Transverse colon (tissue), 4 donors: ENCODE measurements at regions of chr1 and their contacts with region 1.

Region 1: GRCh38 chr1:20981915-20982314 is 194.8 kb downstream of the EIF4G3 start:
- DNase-seq: no peak
- H3K4me3 ChIP-seq: no peak overlapping the region
- H3K27ac ChIP-seq: no peak overlapping the region
- H3K4me1 ChIP-seq: peaks cover 0 to 15% (median 0%) of the 10 kb centered on the region in 4 donors
- H3K27me3 ChIP-seq: no peaks in the 10 kb centered on the region
- CTCF ChIP-seq: peak; percentile 16 to 42 (median 27)
- EP300 ChIP-seq: no peak
- POLR2A ChIP-seq: no peak

Region 2: GRCh38 chr1:21184276-21184675 is 202.4 kb after region 1 on chr1:
- in situ Hi-C with region 1: loop called in 1 of 4 experiments (anchors 10 kb)
- intact Hi-C with region 1: no loop called
- DNase-seq: no peak
- H3K4me3 ChIP-seq: no peak overlapping the region
- H3K27ac ChIP-seq: no peak overlapping the region
- H3K4me1 ChIP-seq: peaks cover 0 to 2% (median 1%) of the 10 kb centered on the region in 4 donors
- H3K27me3 ChIP-seq: no peaks in the 10 kb centered on the region
- CTCF ChIP-seq: no peak
- EP300 ChIP-seq: no peak
- POLR2A ChIP-seq: no peak

Region 3: DNA sequence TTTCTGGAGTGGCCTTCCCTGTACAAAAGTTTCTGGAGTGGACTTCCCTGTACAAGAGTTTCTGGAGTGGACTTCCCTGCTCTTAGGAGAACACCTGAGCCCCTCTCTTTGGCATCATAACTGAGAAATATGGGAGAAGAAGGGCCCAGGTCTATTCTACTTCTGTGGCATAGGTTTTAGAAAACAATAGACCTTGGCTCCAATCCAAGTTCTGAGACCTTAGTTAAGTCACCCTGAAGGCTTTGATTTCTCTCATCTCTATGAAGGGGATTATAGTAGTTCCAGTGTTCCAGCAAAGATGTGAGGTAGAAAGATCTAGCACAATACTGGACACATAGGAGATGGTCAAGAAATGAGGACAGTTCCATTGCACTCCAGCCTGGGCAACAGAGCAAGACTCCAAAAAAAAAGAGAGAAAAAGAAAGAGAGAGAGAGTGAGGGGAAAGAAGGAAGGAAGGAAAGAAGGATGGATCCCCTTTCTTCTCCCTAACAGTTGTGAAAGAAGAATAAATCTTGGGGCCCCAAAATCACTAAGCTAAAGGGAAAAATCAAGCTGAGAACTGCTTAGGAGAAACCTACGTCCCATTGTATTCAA is 208.1 kb after region 1 on chr1:
- in situ Hi-C with region 1: loop called (anchors 10 kb)
- intact Hi-C with region 1: loop called (anchors 2 kb)
- DNase-seq: no peak
- H3K4me3 ChIP-seq: no peak overlapping the region
- H3K27ac ChIP-seq: peak overlapping the region; percentile 67 to 83 (median 82)
- H3K4me1 ChIP-seq: peaks cover 0 to 30% (median 19%) of the 10 kb centered on the region in 4 donors
- H3K27me3 ChIP-seq: no peaks in the 10 kb centered on the region
- CTCF ChIP-seq: no peak
- EP300 ChIP-seq: no peak
- POLR2A ChIP-seq: no peak

Region 4: DNA sequence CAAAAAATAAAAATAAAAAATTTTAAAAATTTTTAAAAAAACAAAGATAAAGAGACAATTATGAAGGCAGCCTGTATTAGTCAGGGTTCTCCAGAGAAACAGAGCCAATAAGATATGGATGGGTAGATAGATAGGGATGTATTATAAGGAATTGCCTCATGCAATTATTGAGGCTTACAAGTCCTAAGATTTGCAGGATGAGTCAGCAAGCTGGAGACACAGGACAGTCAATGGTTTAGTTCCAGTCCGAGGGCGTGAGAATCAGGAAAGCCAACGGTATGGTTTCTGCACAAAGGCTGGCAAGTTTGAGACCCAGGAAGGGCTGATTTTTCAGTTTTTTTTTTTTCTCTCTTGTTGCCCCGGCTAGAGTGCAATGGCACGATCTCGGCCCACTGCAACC is 218.9 kb after region 1 on chr1:
- in situ Hi-C with region 1: loop called in 3 of 4 experiments (anchors 10 kb)
- intact Hi-C with region 1: loop called (anchors 2 kb)
- DNase-seq: no peak
- H3K4me3 ChIP-seq: no peak overlapping the region
- H3K27ac ChIP-seq: no peak overlapping the region
- H3K4me1 ChIP-seq: no peaks in the 10 kb centered on the region
- H3K27me3 ChIP-seq: no peaks in the 10 kb centered on the region
- CTCF ChIP-seq: no peak
- EP300 ChIP-seq: no peak
- POLR2A ChIP-seq: no peak